HCT116 (cell line): ENCODE measurements at regions of chr6 and their contacts with region 1.

Region 1: GRCh38 chr6:27753668-27754407 is 158.4 kb downstream of the OR2B2 start:
- DNase-seq: peak; percentile 90
- ATAC-seq: peak; percentile 79
- H3K4me3 ChIP-seq: peak overlapping the region; percentile 34 to 51
- H3K27ac ChIP-seq: peak overlapping the region; percentile 21; the same call in 1 of the 2 replicates
- H3K4me1 ChIP-seq: peaks cover 6 to 35% of the 10 kb centered on the region in 2 experiments
- H3K27me3 ChIP-seq: no peaks in the 10 kb centered on the region
- CTCF ChIP-seq: peak in 2 of 3 experiments; percentile 10 to 28; a peak in 2 of 6 replicates
- POLR2A ChIP-seq: peak; percentile 21
- RAD21 ChIP-seq: no peak; the same call in 1 of the 2 replicates

Region 2: DNA sequence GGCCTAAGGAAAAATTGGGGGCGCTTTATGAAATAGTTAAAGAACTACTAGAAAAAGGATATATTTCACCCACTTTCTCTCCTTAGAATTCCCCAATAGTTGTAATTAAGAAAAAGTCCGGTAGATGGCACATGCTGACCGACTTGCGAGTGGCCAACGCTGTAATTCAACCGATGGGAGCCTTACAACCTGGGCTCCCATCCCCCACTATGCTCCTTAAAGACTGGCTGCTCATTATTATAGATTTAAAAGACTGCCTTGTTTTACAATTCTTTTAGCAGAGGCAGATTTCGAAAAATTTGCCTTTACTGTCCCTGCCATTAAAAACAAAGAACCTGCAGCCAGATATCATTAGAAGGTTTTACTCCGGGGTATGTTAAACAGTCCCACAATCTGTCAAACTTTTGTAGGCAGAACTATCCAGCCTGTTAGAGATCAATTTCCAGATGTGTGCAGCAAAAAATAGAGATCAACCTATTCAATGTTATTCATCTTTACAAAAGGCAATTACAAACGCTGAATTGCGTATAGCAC is 564.9 kb before region 1 on chr6:
- CTCF ChIA-PET with region 1: interaction called, 3 read pairs
- POLR2A ChIA-PET with region 1: no interaction called
- RAD21 ChIA-PET with region 1: no interaction called
- intact Hi-C with region 1: loop called (anchors 1 kb)
- DNase-seq: peak; percentile 64
- ATAC-seq: peak; percentile 91
- H3K4me3 ChIP-seq: peak overlapping the region; percentile 61 to 62
- H3K27ac ChIP-seq: peak overlapping the region; percentile 61
- H3K4me1 ChIP-seq: peaks cover 2 to 13% of the 10 kb centered on the region in 2 experiments; a peak in 3 of 4 replicates
- H3K27me3 ChIP-seq: no peaks in the 10 kb centered on the region
- CTCF ChIP-seq: peak; percentile 50 to 85 (median 70); a peak in 5 of 6 replicates
- POLR2A ChIP-seq: no peak
- RAD21 ChIP-seq: peak; percentile 95

Region 3: DNA sequence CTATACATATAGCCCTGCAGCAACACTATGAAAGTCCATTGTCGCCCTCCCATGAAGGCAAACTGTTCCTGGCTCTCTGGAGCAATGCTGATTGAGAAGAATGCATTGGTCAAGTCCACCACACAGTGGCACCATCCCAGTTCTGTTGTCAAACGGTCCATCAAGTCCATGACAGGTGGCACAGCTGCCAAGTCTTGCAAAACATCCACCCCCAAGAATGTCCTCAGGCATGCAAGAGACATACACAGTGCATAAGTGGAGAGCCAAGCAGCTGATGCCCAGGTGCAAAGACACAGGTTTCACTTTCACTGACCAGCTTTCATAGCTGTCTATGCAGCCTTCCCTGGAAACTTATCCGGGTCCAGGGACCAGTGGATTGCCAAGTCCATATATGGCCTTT is 347.7 kb before region 1 on chr6:
- CTCF ChIA-PET with region 1: no interaction called
- POLR2A ChIA-PET with region 1: no interaction called
- RAD21 ChIA-PET with region 1: no interaction called
- intact Hi-C with region 1: no loop called
- DNase-seq: no peak
- ATAC-seq: no peak
- H3K4me3 ChIP-seq: no peak overlapping the region
- H3K27ac ChIP-seq: no peak overlapping the region
- H3K4me1 ChIP-seq: peaks cover 0 to 4% of the 10 kb centered on the region in 2 experiments; a peak in 1 of 4 replicates
- H3K27me3 ChIP-seq: no peaks in the 10 kb centered on the region
- CTCF ChIP-seq: no peak
- POLR2A ChIP-seq: no peak
- RAD21 ChIP-seq: no peak

Region 4: GRCh38 chr6:27472617-27473400 is 281.0 kb before region 1 on chr6 and contains the start of gene ZNF184:
- CTCF ChIA-PET with region 1: no interaction called
- POLR2A ChIA-PET with region 1: no interaction called
- RAD21 ChIA-PET with region 1: no interaction called
- intact Hi-C with region 1: loop called (anchors 2 kb)
- DNase-seq: peak; percentile 98
- ATAC-seq: peak; percentile 92
- H3K4me3 ChIP-seq: peak within 1 kb of the TSS; percentile 68 to 75
- H3K27ac ChIP-seq: peak within 1 kb of the TSS; percentile 88
- H3K4me1 ChIP-seq: peaks cover 2 to 28% of the 10 kb centered on the region in 2 experiments; a peak in 3 of 4 replicates
- H3K27me3 ChIP-seq: no peaks in the 10 kb centered on the region
- CTCF ChIP-seq: no peak
- POLR2A ChIP-seq: peak; percentile 77
- RAD21 ChIP-seq: no peak
- total RNA-seq, gene ZNF184: 9.4 TPM

Region 5: DNA sequence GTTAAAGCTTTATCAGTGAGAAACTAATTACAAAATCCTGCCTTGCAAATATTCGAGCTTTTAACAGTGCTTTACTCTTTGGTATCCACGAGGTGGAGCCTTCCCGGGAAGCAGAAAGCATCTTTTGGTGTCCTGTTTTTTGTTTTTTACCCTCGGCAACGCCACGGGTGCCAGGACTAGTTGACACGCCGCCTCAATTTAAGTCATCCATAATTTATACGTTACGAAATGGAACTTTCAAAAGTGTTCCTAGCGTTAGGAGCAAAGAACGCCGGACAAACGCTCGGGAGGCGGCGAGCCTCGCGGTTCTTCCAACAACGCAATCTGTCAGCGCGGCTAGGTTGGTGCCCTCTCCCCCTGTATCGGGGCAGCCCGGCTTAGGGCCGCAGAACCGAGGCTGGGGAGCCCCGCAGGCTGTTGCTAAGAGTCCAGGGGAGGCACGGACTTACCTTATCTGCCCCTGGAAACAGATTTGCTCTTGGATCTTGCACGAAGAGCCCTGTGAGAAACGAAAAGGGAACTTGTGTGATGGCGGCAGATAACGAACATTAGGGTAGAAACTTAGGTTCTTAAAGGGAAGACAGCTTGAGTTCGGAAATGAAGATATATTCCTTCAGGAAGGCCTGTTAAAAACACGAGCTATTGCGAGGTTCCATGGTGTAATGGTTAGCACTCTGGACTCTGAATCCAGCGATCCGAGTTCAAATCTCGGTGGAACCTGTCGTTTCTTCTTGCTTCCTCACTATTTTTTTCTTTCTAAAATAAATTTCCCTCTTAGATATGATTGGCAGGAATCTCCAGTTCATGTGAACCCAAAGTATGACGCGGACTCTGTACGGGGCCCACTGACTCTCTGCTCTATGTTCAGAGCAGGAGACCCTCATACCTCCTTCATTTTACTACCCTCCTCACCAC is 234.7 kb before region 1 on chr6:
- CTCF ChIA-PET with region 1: interaction called, 12 read pairs
- POLR2A ChIA-PET with region 1: interaction called, 4 read pairs
- RAD21 ChIA-PET with region 1: interaction called in 1 of 2 experiments, 5 read pairs
- intact Hi-C with region 1: loop called (anchors 2 kb)
- DNase-seq: peak; percentile 92
- ATAC-seq: peak; percentile 89
- H3K4me3 ChIP-seq: peak overlapping the region; percentile 60 to 75
- H3K27ac ChIP-seq: peak overlapping the region; percentile 70
- H3K4me1 ChIP-seq: peaks cover 0 to 15% of the 10 kb centered on the region in 2 experiments; a peak in 2 of 4 replicates
- H3K27me3 ChIP-seq: no peaks in the 10 kb centered on the region
- CTCF ChIP-seq: peak; percentile 70 to 81 (median 75); a peak in 5 of 6 replicates
- POLR2A ChIP-seq: no peak
- RAD21 ChIP-seq: peak; percentile 70

Region 6: GRCh38 chr6:27617700-27618689 is 135.8 kb before region 1 on chr6:
- CTCF ChIA-PET with region 1: interaction called, 9 read pairs
- POLR2A ChIA-PET with region 1: no interaction called
- RAD21 ChIA-PET with region 1: no interaction called
- intact Hi-C with region 1: loop called (anchors 5 kb)
- DNase-seq: peak; percentile 62
- ATAC-seq: peak; percentile 86
- H3K4me3 ChIP-seq: peak overlapping the region; percentile 45 to 60
- H3K27ac ChIP-seq: peak overlapping the region; percentile 51
- H3K4me1 ChIP-seq: peaks cover 4 to 19% of the 10 kb centered on the region in 2 experiments; a peak in 2 of 4 replicates
- H3K27me3 ChIP-seq: no peaks in the 10 kb centered on the region
- CTCF ChIP-seq: peak in 2 of 3 experiments; percentile 14 to 21; a peak in 1 of 6 replicates
- POLR2A ChIP-seq: no peak
- RAD21 ChIP-seq: peak; percentile 48

Region 7: DNA sequence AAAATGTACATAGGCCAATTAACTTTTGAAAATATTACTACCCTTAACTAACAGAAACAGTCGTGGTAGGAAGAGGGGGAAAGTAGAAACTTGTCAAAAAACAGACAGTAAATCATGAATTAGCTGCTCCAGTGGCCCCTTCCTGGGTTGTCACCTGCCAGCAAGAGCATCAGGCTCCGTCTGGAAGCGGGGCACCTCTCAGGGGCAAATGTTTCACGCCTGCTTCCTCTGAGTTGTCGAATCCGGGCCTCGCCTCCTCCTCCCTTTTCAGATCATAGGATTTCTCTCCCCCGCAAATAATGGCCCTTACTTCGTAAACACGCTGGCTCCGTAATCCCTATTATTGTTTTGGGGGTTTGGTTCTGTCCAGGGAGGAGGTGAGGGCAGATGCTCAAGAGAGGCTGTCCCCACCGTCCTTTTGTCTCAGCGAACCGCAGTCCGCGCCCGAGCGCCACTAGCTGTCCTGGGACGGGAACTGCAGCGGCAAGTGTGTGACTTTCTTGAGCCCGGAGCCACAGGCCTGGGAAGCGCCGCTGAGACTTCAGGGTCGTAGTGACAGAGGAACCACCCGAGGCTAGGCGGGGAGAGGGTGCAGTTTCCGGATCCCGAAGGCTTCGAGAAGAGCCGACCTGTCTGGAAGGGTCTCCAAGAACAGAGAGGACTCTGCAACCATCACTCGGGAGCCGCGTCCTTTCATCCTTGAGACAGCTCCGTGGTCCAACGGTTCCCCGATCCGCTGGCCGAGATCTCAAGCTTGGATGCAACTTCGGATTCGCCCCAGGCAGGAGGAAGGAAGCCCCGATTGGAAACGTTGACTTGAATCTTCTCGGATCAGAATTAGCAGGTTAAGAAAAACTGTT is 66.5 kb before region 1 on chr6:
- CTCF ChIA-PET with region 1: interaction called, 7 read pairs
- POLR2A ChIA-PET with region 1: interaction called, 5 read pairs
- RAD21 ChIA-PET with region 1: interaction called in 1 of 2 experiments, 3 read pairs
- intact Hi-C with region 1: loop called (anchors 2 kb)
- DNase-seq: peak; percentile 79
- ATAC-seq: peak; percentile 70
- H3K4me3 ChIP-seq: peak overlapping the region; percentile 54 to 56
- H3K27ac ChIP-seq: peak overlapping the region; percentile 54
- H3K4me1 ChIP-seq: peaks cover 15 to 31% of the 10 kb centered on the region in 2 experiments
- H3K27me3 ChIP-seq: no peaks in the 10 kb centered on the region
- CTCF ChIP-seq: peak; percentile 55 to 81 (median 79); a peak in 5 of 6 replicates
- POLR2A ChIP-seq: no peak
- RAD21 ChIP-seq: peak; percentile 76

Region 8: GRCh38 chr6:27772261-27773001 is 18.6 kb after region 1 on chr6:
- CTCF ChIA-PET with region 1: interaction called, 25 read pairs
- POLR2A ChIA-PET with region 1: interaction called, 5 read pairs
- RAD21 ChIA-PET with region 1: no interaction called
- intact Hi-C with region 1: no loop called
- DNase-seq: peak; percentile 78
- ATAC-seq: peak; percentile 92
- H3K4me3 ChIP-seq: peak overlapping the region; percentile 3 to 38; a peak in 3 of 4 replicates
- H3K27ac ChIP-seq: peak overlapping the region; percentile 4; the same call in 1 of the 2 replicates
- H3K4me1 ChIP-seq: peaks cover 4 to 16% of the 10 kb centered on the region in 2 experiments; a peak in 3 of 4 replicates
- H3K27me3 ChIP-seq: no peaks in the 10 kb centered on the region
- CTCF ChIP-seq: peak; percentile 85 to 93 (median 91)
- POLR2A ChIP-seq: no peak
- RAD21 ChIP-seq: peak; percentile 72